MCF 10A (cell line): ENCODE measurements at regions of chr7 and their contacts with region 1.

Region 1: GRCh38 chr7:20778063-20778721 is 8.5 kb downstream of the SP8 start:
- DNase-seq: peak; percentile 21
- H3K4me3 Mint-ChIP-seq: peak overlapping the region; percentile 58
- H3K27ac Mint-ChIP-seq: no peak overlapping the region
- H3K4me1 Mint-ChIP-seq: peaks cover 10% of the 10 kb centered on the region
- H3K27me3 Mint-ChIP-seq: peaks cover 37% of the 10 kb centered on the region
- CTCF ChIP-seq: peak; percentile 81

Region 2: DNA sequence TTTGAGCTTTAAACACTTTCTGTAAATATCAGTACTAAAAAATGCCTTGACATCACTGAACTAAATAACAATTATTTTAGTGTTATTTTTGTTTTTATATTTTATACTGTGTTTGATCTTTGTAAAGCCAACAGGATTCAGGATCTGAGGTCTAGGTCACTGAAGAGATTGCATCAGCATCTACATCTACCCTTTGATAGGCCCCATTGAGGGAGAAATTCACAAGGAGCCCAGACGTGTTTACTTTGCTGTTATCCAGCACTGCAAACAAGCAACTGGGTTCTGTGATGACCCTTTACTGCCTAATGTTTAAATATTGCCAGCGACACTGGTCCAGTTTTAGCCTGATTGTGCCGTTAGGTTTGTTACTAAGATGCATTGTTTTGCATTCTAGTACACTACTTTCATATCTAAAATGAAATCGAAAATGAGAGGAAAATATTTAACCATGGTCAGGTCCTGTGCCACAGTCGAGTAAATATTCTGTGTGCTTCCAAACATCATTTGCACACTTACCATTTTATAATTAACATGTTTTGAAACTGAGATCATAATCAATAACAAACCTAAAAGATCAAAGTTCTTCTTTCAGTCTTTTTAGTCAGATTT is 40.2 kb before region 1 on chr7:
- CTCF ChIA-PET with region 1: no interaction called
- POLR2A ChIA-PET with region 1: no interaction called
- intact Hi-C with region 1: no loop called
- DNase-seq: no peak
- H3K4me3 Mint-ChIP-seq: no peak overlapping the region
- H3K27ac Mint-ChIP-seq: no peak overlapping the region
- H3K4me1 Mint-ChIP-seq: no peaks in the 10 kb centered on the region
- H3K27me3 Mint-ChIP-seq: no peaks in the 10 kb centered on the region
- CTCF ChIP-seq: no peak

Region 3: GRCh38 chr7:20991544-20991943 is 213.4 kb after region 1 on chr7:
- CTCF ChIA-PET with region 1: interaction called, 3 read pairs
- POLR2A ChIA-PET with region 1: no interaction called
- intact Hi-C with region 1: loop called (anchors 10 kb)
- DNase-seq: peak; percentile 24
- H3K4me3 Mint-ChIP-seq: no peak overlapping the region
- H3K27ac Mint-ChIP-seq: no peak overlapping the region
- H3K4me1 Mint-ChIP-seq: no peaks in the 10 kb centered on the region
- H3K27me3 Mint-ChIP-seq: no peaks in the 10 kb centered on the region
- CTCF ChIP-seq: peak; percentile 40

Region 4: DNA sequence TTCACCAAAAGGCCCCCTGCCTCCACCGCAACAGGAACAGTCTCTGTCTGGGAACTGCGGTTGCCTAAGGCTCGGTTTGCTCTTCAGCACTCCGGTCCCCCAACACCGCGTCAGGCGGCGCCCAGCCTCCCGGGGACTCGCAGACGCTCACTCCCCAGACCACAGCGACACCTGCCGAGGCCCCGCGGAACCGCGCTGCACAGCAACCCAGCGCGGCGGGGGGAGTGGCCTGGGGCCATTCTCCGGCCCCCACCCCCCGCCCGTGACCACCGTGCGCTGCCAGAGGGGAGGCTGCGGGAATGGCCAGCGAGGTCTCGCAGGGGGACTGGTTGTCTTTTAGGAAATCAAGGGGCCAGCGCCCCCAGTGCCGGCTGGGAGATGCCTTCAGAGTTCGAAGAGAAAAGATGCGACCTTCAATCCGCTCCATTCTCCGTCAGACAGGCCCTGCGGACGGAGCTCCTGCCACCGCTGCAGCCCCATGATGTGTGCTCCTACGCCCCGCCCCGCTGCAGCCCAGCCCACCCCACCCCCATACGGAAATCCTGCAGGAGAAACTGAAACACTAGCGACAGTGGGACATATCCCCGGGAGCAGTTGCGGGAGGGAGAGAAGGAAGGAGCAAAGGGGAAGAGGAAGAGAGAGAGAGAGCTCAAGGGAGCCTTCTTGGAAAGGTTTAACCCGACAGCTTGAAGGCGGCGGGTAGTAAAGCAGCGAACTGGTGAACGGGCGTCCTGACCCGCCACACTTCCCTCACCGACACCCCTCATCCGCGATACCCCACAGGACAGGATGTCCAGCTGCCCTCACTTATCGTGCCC is 1304.9 kb after region 1 on chr7:
- CTCF ChIA-PET with region 1: no interaction called
- POLR2A ChIA-PET with region 1: no interaction called
- intact Hi-C with region 1: loop called (anchors 10 kb)
- DNase-seq: peak; percentile 76
- H3K4me3 Mint-ChIP-seq: peak overlapping the region; percentile 73
- H3K27ac Mint-ChIP-seq: peak overlapping the region; percentile 73
- H3K4me1 Mint-ChIP-seq: no peaks in the 10 kb centered on the region
- H3K27me3 Mint-ChIP-seq: peaks cover 22% of the 10 kb centered on the region
- CTCF ChIP-seq: peak; percentile 93